Dorsolateral prefrontal cortex (tissue), 120 donors: ENCODE measurements at regions of chr1 and their contacts with region 1.

Region 1: DNA sequence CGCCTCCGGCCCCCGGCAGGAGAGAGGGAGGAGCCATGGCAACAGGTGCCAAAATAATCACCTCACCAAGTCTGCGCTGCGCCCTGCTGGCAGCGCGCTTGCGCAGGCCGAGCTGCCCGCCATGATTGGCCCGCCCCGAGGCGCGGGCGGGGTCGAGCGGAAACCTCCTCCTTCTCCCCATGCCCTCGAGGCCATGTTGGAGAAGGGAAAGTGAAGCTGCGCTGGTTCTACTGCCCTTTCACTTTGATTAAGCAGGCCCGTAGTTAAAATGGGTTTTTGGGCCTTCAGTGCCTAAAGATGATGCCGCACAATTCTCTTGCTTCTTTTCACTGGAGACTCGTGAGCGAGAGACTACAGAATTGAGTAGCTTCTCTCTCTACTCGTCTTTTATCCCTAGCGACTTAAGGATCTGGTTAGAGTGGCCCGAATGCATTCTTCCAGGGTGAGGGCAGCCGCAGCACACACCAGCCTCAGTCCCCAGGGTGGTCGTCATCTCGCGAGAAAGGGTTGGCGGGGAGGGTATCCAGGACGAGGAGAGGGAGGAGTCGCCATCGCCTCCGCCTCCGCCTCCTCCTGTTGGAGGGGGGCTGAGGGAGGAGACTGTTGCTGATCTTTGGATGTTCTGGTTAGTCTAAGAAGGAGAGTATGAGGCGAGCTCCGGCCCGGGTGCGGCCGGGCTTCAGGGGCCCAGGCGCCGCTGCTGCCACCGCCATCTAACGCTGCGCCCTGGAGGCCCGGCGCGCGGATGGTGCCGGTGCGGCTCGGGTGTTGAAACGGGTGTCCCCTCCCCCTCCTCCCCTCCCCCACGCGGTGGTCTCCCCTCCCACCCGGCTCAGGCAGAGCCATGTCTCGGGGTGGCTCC is at the start of gene DCAF6:
- DNase-seq: peak; percentile 82 to 96 (median 94)
- H3K4me3 ChIP-seq: peak within 1 kb of the TSS; percentile 69 to 98 (median 88)
- H3K27ac ChIP-seq: peak within 1 kb of the TSS; percentile 83 to 100 (median 97)
- H3K27me3 ChIP-seq: no peaks in the 10 kb centered on the region
- CTCF ChIP-seq: peak in 25 of 56 donors; percentile 5 to 42 (median 24)
- total RNA-seq, gene DCAF6: 42.0 to 151 (median 100) TPM

Region 2: DNA sequence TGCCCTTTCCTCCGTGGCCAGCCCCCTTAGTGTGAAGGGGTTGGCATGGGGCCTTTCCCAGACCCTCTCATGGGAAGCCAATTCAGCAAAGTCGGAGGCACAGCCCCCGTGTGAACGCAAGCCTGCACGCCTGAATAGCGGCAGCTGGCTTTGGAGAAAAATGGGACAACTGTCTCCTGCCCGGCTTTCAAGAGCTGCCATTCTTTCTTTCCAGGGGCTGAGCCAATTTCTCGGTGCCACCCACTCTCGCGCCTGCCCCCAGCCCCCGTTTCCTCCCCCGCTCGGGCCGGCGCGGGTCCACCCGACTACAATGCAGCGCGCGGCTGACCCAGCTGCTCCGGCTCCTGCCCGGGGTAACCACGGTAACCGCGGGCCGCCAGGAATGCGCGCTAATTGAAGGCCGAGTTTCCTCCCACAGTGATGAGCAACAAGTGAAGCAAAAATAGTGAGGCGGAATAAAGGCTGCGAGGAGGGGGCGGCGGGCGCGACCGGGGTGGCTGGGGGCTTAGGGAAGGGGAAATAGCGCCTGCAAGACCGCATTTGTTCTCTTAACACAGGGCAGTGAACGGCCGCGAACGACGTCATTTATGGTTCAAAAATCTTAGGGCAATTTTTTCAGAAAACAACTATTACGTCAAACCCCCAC is 988.8 kb before region 1 on chr1:
- intact Hi-C with region 1: loop called in 1 of 2 experiments (anchors 5 kb)
- DNase-seq: peak; percentile 57 to 92 (median 88)
- H3K4me3 ChIP-seq: peak overlapping the region; percentile 12 to 66 (median 50)
- H3K27ac ChIP-seq: peak overlapping the region; percentile 66 to 98 (median 93)
- H3K27me3 ChIP-seq: no peaks in the 10 kb centered on the region
- CTCF ChIP-seq: peak in 15 of 56 donors; percentile 6 to 47 (median 25)

Region 3: DNA sequence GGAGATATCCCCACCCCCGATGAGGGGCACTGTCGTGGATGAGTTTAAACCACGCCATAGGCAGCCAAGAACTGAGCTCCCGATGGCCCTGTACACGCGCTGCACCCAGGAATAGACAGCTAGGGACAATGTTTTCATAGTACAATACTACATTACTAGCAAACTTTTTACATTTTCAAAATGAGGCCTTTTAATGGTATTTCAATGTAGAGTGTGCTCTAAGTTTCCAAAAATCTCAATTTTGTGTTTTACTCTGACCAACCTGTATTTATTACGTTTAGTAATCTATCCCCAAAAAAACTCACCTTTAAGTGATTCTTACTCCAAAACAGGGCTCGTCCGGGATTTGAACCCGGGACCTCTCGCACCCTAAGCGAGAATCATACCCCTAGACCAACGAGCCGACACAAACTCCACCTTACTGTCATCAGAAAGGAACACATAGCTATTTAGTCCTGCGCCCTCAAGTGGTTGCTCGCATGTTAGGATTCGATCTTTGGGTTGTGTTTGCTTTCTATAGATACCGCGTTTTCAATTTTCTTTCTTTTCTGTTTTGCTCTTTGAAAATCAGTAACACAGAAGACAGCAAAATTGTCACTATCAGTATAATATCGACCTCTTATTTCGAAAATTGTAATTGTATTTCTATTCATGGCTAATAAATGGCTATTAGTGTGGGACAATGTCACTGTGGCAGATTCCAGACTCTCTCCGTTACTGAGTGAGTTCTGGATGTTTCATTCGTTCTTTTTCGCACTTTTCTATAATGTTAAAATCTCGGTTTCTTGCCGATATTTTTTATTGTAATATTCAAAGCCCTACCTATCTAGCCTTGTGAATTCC is 220.9 kb before region 1 on chr1:
- intact Hi-C with region 1: loop called (anchors 2 to 5 kb)
- DNase-seq: peak; percentile 72 to 92 (median 82)
- H3K4me3 ChIP-seq: peak overlapping the region; percentile 64 to 94 (median 84)
- H3K27ac ChIP-seq: peak overlapping the region in 58 of 59 donors; percentile 8 to 91 (median 78)
- H3K27me3 ChIP-seq: no peaks in the 10 kb centered on the region
- CTCF ChIP-seq: peak; percentile 55 to 97 (median 88)

Region 4: GRCh38 chr1:167721617-167722151 is 214.6 kb before region 1 on chr1 and contains the start of gene MPZL1:
- intact Hi-C with region 1: loop called in 1 of 2 experiments (anchors 5 kb)
- DNase-seq: peak; percentile 91 to 98 (median 94)
- H3K4me3 ChIP-seq: peak within 1 kb of the TSS; percentile 72 to 98 (median 90)
- H3K27ac ChIP-seq: peak within 1 kb of the TSS in 58 of 59 donors; percentile 40 to 94 (median 85)
- H3K27me3 ChIP-seq: peaks cover 0 to 6% (median 0%) of the 10 kb centered on the region in 45 donors
- CTCF ChIP-seq: peak in 24 of 56 donors; percentile 6 to 42 (median 18)
- total RNA-seq, gene MPZL1: 23.8 to 52.3 (median 34.9) TPM

Region 5: DNA sequence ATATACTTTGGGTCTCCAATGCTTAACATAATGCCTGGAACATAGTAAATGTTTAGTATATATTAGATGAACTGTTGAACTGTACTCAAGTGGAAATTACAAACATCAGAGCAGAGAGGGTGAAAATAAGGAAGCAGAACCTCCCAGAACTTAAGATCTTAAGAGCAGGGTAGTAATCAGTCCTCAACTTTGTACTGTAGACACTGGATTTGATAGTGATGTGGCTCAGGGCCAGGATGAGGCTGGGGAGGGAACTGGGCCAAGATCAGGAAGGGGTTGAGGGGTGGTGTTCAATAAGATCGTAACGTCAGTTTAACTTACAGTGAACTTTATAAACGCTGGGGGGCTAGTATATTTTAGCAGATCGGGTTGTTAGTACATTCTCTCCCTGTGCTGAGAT is 199.1 kb before region 1 on chr1:
- intact Hi-C with region 1: no loop called
- DNase-seq: no peak
- H3K4me3 ChIP-seq: no peak overlapping the region
- H3K27ac ChIP-seq: no peak overlapping the region
- H3K27me3 ChIP-seq: peaks cover 0 to 4% (median 0%) of the 10 kb centered on the region in 45 donors
- CTCF ChIP-seq: no peak

Region 6: DNA sequence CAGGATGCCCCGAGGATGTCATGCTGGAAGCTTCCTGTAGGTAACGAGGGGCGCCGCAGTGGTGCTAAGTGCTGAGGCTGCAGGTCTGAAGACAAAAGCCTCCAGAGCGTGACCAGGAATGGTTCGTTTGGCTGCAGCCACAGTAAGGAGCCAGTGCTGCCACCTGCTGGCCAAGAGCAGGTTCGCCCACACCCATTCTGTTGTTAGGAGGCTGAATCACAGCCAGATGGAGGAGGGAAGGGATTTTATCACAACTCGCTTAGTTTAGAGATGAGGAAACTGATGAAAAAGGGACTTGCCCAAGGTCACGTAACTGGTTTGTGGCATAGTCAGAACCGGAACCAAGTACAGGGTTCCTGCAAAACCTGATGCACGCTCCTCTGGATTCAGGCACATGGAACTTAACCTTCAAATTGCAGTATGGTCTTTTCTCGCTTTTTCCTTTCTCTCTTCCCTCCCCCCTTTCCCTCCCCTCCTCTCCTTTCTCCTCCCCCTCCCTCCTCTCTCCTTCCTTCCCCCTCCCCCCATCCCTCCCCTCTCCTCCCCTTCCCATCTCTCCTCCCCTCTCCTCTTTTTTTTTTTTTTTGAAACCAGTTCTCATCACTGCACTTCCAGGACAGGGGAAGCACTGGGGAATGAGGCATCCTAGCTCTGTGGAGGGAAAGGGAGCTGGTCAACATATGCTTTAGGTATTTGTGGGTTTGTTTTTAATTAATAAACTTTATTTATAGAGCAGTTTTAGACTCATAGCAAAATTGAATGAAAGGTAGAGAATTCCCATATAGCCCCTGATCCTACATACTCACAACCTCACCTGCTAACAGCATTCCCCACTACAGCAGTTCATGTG is 132.7 kb before region 1 on chr1:
- intact Hi-C with region 1: loop called in 1 of 2 experiments (anchors 10 kb)
- DNase-seq: peak; percentile 77 to 92 (median 88)
- H3K4me3 ChIP-seq: peak overlapping the region in 16 of 59 donors; percentile 0 to 26 (median 14)
- H3K27ac ChIP-seq: peak overlapping the region in 3 of 59 donors; percentile 8 to 40 (median 30)
- H3K27me3 ChIP-seq: peaks cover 0 to 3% (median 0%) of the 10 kb centered on the region in 45 donors
- CTCF ChIP-seq: peak; percentile 89 to 99 (median 95)

Region 7: GRCh38 chr1:168004531-168004930 is 68.2 kb after region 1 on chr1:
- intact Hi-C with region 1: loop called in 1 of 2 experiments (anchors 10 kb)
- DNase-seq: peak in 1 of 10 donors; percentile 33
- H3K4me3 ChIP-seq: no peak overlapping the region
- H3K27ac ChIP-seq: peak overlapping the region in 28 of 59 donors; percentile 1 to 66 (median 29)
- H3K27me3 ChIP-seq: no peaks in the 10 kb centered on the region
- CTCF ChIP-seq: peak in 1 of 56 donors; percentile 9

Region 8: DNA sequence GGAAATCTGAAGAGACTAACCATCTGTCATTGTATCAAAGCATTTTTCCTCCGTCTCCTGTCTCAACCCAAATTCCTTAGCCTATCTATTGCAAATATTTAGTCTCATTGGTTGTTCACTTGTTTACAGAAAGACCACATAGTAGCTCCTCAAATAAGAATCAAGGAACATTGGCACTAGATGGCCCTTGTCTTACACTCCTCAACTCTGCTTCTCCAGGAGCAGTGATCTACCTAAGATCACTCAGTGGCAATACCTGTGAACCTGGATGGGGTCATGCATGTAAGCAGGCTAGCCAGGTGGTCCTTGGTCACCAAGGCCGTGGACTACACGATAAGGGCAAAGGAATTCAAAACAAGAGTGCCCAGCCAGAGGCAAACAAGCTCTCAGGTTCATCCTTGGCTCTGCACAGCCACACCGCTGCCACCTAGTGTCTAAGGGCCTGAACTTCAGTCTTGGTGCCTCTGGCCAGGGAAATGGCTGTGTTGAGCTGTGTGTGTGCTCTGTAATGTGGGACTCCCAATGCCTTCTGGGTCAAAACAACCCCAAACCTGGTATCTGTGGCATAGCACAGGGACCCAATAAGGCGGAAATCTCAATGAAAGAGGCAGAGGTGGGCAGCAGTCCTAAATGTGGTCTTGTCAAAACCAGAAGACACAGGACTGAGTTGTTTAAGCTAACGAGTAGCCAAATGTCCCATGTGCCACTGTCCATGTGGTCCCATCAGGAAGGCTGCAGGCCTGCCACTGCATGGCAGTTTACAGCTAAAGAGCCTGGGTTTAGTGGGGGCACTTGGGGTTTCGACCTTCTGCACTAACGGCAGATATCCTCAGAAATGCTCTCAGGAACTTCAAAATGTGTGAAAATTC is 145.9 kb after region 1 on chr1:
- intact Hi-C with region 1: loop called (anchors 2 kb)
- DNase-seq: peak; percentile 55 to 84 (median 77)
- H3K4me3 ChIP-seq: no peak overlapping the region
- H3K27ac ChIP-seq: peak overlapping the region in 45 of 59 donors; percentile 2 to 83 (median 44)
- H3K27me3 ChIP-seq: no peaks in the 10 kb centered on the region
- CTCF ChIP-seq: peak; percentile 57 to 91 (median 83)